ENCODE measurements at regions of chr1 and their contacts with region 1.

Region 1: DNA sequence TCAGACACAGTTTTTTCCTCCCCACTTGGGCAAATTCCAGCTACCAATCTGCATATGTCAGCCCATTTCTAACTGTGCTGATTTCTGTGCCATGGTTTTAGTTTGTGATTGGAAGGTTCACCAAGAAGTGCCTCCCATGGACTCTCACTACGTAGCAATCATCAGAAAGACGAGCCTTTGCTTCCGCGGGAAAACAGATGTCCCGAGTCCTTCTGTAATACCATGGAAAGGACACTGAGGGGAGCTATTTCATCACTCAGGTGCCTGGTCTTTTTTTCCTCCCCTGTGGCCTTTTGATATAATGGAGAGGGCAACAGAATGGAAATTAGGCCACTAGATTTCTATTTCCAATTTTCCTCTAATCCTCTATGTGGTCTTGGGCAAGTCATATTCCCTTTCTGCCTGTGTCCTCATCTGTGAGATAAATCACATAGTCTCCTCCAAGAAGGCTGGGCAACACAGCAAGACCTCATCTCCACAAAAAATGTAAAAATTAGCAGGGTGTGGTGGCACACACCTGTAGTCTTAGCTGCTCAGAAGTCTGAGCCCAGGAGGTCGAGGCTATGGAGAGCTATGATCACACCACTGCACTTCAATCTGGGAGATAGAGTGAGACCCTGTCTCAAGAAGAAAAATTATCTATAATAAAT is 24.8 kb downstream of the LEMD1 start:
- DNase-seq: peak in 1 of 5 donors; percentile 15
- ATAC-seq: peak in 3 of 4 donors; percentile 48 to 78 (median 59)
- H3K4me3 ChIP-seq: no peak overlapping the region
- H3K27ac ChIP-seq: no peak overlapping the region
- H3K4me1 ChIP-seq: no peaks in the 10 kb centered on the region
- H3K27me3 ChIP-seq: peaks cover 0 to 15% (median 0%) of the 10 kb centered on the region in 9 donors
- CTCF ChIP-seq: peak; percentile 59 to 83 (median 76)
- POLR2A ChIP-seq: no peak

Region 2: DNA sequence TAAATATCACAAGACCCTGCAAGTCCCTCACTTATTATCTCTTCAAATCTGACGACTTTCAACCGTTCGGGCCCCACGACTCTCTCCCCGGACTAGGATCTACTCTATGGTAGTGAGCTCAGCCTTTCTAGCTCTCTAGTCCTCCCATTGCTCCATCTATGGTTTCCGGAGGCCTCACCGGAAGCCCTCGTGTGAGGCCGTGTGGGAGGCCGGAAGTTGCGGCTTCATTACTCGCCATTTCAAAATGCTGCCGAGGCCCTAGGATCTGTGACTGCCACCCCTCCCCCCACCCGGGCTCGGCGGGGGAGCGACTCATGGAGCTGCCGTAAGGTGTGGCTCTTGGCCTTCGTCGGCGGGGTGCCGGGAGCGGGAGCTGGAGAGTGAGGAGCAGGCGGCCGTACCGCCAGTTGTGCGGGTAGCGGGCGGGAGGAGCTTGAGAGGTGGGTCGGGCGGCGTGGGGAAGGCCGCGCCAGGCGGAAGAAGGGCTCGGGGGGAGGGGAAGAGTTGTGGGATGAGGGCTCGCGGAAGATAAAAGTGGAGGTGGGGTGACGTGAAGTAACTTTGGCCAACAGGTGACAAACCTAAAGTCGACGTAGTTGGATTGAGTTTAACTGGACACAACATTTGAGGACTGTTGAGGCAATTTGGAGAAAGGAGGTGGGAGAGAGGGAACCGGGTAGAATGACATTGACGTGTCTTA is 880.8 kb before region 1 on chr1 and contains the start of gene MDM4:
- intact Hi-C with region 1: no loop called
- DNase-seq: peak; percentile 90 to 95 (median 92)
- ATAC-seq: peak; percentile 97 to 99 (median 98)
- H3K4me3 ChIP-seq: peak within 1 kb of the TSS; percentile 53 to 95 (median 76)
- H3K27ac ChIP-seq: peak within 1 kb of the TSS; percentile 81 to 98 (median 93)
- H3K4me1 ChIP-seq: peaks cover 3 to 81% (median 35%) of the 10 kb centered on the region in 12 donors
- H3K27me3 ChIP-seq: no peaks in the 10 kb centered on the region
- CTCF ChIP-seq: no peak
- POLR2A ChIP-seq: peak in 1 of 2 donors; percentile 54
- total RNA-seq, gene MDM4: 8.9 to 48.7 (median 33.0) TPM

Region 3: GRCh38 chr1:204868340-204868700 is 528.8 kb before region 1 on chr1:
- intact Hi-C with region 1: no loop called
- DNase-seq: peak in 1 of 5 donors; percentile 51
- ATAC-seq: peak in 3 of 4 donors; percentile 32 to 65 (median 51)
- H3K4me3 ChIP-seq: no peak overlapping the region
- H3K27ac ChIP-seq: peak overlapping the region in 8 of 12 donors; percentile 3 to 39 (median 30)
- H3K4me1 ChIP-seq: peaks cover 0 to 45% (median 7%) of the 10 kb centered on the region in 12 donors
- H3K27me3 ChIP-seq: no peaks in the 10 kb centered on the region
- CTCF ChIP-seq: no peak
- POLR2A ChIP-seq: no peak

Region 4: GRCh38 chr1:205255941-205256780 is 140.9 kb before region 1 on chr1:
- intact Hi-C with region 1: no loop called
- DNase-seq: peak; percentile 88 to 92 (median 91)
- ATAC-seq: peak; percentile 91 to 93 (median 92)
- H3K4me3 ChIP-seq: no peak overlapping the region
- H3K27ac ChIP-seq: peak overlapping the region in 6 of 12 donors; percentile 6 to 43 (median 35)
- H3K4me1 ChIP-seq: peaks cover 2 to 54% (median 35%) of the 10 kb centered on the region in 12 donors
- H3K27me3 ChIP-seq: no peaks in the 10 kb centered on the region
- CTCF ChIP-seq: peak; percentile 92 to 99 (median 96)
- POLR2A ChIP-seq: no peak

Region 5: DNA sequence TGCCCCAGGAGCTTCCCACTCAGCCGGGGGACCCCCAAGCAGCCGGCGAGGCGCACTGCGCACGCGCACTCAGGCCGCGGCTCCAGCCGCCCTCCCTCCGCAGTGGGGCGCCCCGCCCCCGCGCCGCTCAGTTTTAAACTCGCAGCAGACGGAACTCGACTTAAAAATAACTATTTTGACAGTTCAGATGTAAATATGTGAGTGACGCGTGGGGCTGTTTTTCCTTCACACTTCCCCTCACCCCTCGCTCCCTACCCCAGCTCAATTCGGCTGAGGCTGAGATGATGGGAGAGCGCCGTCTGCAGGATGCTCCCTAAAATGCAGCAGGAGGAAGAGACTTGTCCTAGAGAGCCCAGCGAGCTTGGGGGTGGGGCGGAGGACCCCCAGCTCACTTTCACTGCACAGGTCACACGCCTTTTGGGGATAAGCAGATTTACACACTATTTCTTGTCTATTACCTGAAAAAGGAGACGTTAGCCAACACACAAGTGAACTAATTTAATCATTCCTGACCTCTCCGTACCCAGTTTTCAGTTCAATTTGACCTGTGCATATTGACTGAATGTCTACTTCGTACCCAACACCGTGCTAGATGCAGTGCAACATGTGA is 33.7 kb after region 1 on chr1:
- intact Hi-C with region 1: loop called in 7 of 10 experiments (anchors 2 to 5 kb)
- DNase-seq: peak in 4 of 5 donors; percentile 42 to 63 (median 56)
- ATAC-seq: peak; percentile 63 to 86 (median 74)
- H3K4me3 ChIP-seq: peak overlapping the region in 11 of 12 donors; percentile 28 to 65 (median 55)
- H3K27ac ChIP-seq: no peak overlapping the region
- H3K4me1 ChIP-seq: peaks cover 0 to 12% (median 4%) of the 10 kb centered on the region in 12 donors
- H3K27me3 ChIP-seq: no peaks in the 10 kb centered on the region
- CTCF ChIP-seq: peak; percentile 66 to 89 (median 78)
- POLR2A ChIP-seq: no peak

Region 6: DNA sequence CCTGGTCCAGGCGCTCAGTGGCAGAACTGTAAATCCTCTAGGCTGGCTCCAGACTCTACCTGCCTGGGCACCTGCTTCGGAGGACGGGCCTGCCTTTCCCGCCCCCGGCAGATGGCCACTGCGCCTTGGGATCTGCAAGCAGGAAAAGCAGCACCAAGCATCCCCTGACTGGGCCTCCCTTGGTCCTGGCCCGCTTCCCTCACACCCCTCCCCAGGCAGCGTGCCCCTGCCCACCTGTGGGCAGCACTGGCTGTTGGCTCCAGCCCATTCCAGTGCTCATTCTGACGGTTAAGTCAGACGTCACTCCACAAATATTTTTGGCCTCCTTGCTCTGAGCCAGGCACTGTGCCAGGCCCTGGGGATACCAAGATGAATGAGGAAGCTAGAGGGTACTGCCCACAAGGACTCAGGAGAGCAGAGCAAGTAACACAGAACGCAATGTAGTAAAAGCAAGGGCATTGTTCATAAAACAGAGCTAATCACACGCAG is 80.7 kb after region 1 on chr1:
- intact Hi-C with region 1: loop called in 1 of 10 experiments (anchors 2 kb)
- DNase-seq: peak in 4 of 5 donors; percentile 42 to 72 (median 56)
- ATAC-seq: peak in 3 of 4 donors; percentile 62 to 77 (median 75)
- H3K4me3 ChIP-seq: no peak overlapping the region
- H3K27ac ChIP-seq: no peak overlapping the region
- H3K4me1 ChIP-seq: peaks cover 0 to 10% (median 0%) of the 10 kb centered on the region in 12 donors
- H3K27me3 ChIP-seq: peaks cover 0 to 54% (median 16%) of the 10 kb centered on the region in 9 donors
- CTCF ChIP-seq: no peak
- POLR2A ChIP-seq: no peak

Region 7: GRCh38 chr1:205523891-205524793 is 127.0 kb after region 1 on chr1:
- intact Hi-C with region 1: loop called in 3 of 10 experiments (anchors 1 to 10 kb)
- DNase-seq: peak; percentile 71 to 83 (median 76)
- ATAC-seq: peak; percentile 26 to 59 (median 46)
- H3K4me3 ChIP-seq: no peak overlapping the region
- H3K27ac ChIP-seq: no peak overlapping the region
- H3K4me1 ChIP-seq: peaks cover 0 to 74% (median 41%) of the 10 kb centered on the region in 12 donors
- H3K27me3 ChIP-seq: no peaks in the 10 kb centered on the region
- CTCF ChIP-seq: peak; percentile 64 to 88 (median 82)
- POLR2A ChIP-seq: no peak

Region 8: GRCh38 chr1:205528887-205529825 is 132.1 kb after region 1 on chr1:
- intact Hi-C with region 1: loop called in 4 of 10 experiments (anchors 1 to 10 kb)
- DNase-seq: peak; percentile 77 to 90 (median 82)
- ATAC-seq: peak; percentile 31 to 75 (median 60)
- H3K4me3 ChIP-seq: peak overlapping the region in 9 of 12 donors; percentile 21 to 50 (median 46)
- H3K27ac ChIP-seq: peak overlapping the region in 2 of 12 donors; percentile 36 to 53
- H3K4me1 ChIP-seq: peaks cover 0 to 34% (median 18%) of the 10 kb centered on the region in 12 donors
- H3K27me3 ChIP-seq: no peaks in the 10 kb centered on the region
- CTCF ChIP-seq: peak; percentile 90 to 98 (median 94)
- POLR2A ChIP-seq: no peak

Region 9: GRCh38 chr1:205536759-205537361 is 139.8 kb after region 1 on chr1:
- intact Hi-C with region 1: loop called in 1 of 10 experiments (anchors 5 kb)
- DNase-seq: peak in 2 of 5 donors; percentile 53 to 59
- ATAC-seq: peak; percentile 56 to 81 (median 68)
- H3K4me3 ChIP-seq: no peak overlapping the region
- H3K27ac ChIP-seq: peak overlapping the region in 2 of 12 donors; percentile 19 to 21
- H3K4me1 ChIP-seq: peaks cover 0 to 21% (median 6%) of the 10 kb centered on the region in 12 donors
- H3K27me3 ChIP-seq: no peaks in the 10 kb centered on the region
- CTCF ChIP-seq: no peak
- POLR2A ChIP-seq: no peak

Region 10: DNA sequence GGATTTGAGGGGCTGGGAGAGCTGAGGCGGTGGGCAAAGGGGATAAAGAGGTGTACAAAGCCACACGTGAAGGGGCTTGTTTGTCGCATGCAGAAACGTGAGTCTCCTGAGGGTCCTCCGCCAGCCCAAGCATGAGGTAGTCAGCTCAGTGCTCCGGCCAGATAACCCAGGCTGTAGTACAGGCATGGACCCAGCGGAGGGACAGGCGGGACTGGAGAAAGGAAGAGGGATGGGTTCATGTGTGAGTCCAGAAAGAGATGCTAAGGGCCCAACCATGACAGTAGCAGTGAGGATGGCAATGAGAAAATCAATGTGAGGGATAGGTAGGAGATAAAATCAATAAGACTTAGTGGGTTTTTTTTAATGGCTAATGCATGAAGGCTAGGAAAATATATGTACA is 248.4 kb after region 1 on chr1:
- intact Hi-C with region 1: loop called in 1 of 10 experiments (anchors 10 kb)
- DNase-seq: no peak
- ATAC-seq: no peak
- H3K4me3 ChIP-seq: no peak overlapping the region
- H3K27ac ChIP-seq: no peak overlapping the region
- H3K4me1 ChIP-seq: peaks cover 0 to 5% (median 0%) of the 10 kb centered on the region in 12 donors
- H3K27me3 ChIP-seq: no peaks in the 10 kb centered on the region
- CTCF ChIP-seq: no peak
- POLR2A ChIP-seq: no peak